Activated naive CD4-positive, alpha-beta T cell treated with anti-CD3 and anti-CD28 coated beads, Interleukin-2, amount 10 ng/mL, durations not matched to agents 7 days and 5 days (primary cell): ENCODE measurements at regions of chr6 and their contacts with region 1.

Region 1: DNA sequence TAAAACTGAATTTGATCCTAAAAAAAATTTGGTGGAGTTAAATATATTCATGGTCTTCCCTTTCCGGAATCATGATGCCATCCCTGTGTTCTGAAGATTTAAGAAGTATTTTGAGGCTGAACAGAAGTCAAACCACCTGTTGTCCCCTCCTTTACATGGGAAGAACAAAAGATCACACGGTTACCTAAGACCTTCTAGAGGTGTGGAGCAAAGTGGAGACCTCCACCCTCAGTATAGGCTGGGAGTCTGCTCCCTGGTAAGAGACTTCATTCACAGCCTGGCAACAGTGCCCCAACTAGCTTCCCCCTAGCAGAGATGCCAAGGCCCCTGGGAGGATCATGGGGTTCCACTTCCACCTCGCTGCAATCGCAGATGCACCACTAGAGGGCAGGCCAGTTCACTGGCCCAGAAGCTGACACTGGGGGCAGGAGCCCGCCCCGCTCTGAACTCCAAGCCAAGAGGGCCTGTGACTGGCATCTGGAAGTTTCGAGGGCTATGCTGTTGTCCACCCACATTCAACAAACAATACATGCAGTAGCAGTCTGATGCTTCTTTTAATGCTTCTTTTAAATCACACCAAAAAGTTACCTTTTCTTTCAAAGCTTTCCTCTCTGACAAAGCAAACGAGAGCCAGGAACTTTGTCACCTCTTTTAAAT is 19.5 kb upstream of the UBE2J1 start:
- DNase-seq: peak; percentile 85
- H3K4me3 Mint-ChIP-seq: no peak overlapping the region
- H3K27ac Mint-ChIP-seq: peak overlapping the region; percentile 84
- H3K4me1 Mint-ChIP-seq: peaks cover 45% of the 10 kb centered on the region
- H3K27me3 Mint-ChIP-seq: no peaks in the 10 kb centered on the region

Region 2: GRCh38 chr6:89297695-89298351 is 74.2 kb before region 1 on chr6:
- CTCF ChIA-PET with region 1: interaction called, 10 read pairs
- DNase-seq: peak; percentile 72
- H3K4me3 Mint-ChIP-seq: peak overlapping the region; percentile 13
- H3K27ac Mint-ChIP-seq: peak overlapping the region; percentile 91
- H3K4me1 Mint-ChIP-seq: peaks cover 23% of the 10 kb centered on the region
- H3K27me3 Mint-ChIP-seq: peaks cover 8% of the 10 kb centered on the region

Region 3: DNA sequence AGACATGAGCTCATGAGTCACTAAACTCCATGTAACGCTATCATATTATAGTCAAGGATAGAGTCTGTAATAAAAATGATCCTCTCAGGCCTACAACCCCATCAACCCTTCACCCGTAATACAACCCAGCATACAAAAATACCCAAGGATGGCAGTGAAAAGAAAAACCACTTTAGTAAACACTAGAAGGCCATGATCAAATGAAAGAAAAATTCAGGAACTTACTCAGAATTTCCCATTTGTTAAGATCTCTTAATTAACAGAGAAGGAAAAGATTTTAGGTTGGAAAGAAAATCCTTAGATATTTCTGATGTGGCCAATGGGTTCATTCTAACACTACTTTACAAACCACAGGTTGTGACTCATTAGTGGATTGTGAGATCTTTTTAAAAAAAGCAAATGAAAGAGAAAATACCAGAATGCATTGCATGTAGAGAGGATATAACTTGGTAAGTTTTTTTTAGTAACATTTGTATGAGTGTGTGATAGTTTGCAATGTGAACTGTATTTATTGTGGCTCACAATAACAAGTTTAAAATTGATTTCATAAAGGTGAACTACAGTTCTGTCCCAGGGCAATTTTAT is 11.5 kb before region 1 on chr6:
- CTCF ChIA-PET with region 1: interaction called, 21 read pairs
- DNase-seq: no peak
- H3K4me3 Mint-ChIP-seq: no peak overlapping the region
- H3K27ac Mint-ChIP-seq: peak overlapping the region; percentile 75
- H3K4me1 Mint-ChIP-seq: peaks cover 70% of the 10 kb centered on the region
- H3K27me3 Mint-ChIP-seq: no peaks in the 10 kb centered on the region

Region 4: GRCh38 chr6:89432875-89433251 is 60.9 kb after region 1 on chr6 and contains the start of gene ANKRD6:
- CTCF ChIA-PET with region 1: interaction called, 18 read pairs
- DNase-seq: peak; percentile 81
- H3K4me3 Mint-ChIP-seq: peak within 1 kb of the TSS; percentile 81
- H3K27ac Mint-ChIP-seq: no peak within 1 kb of the TSS
- H3K4me1 Mint-ChIP-seq: peaks cover 20% of the 10 kb centered on the region
- H3K27me3 Mint-ChIP-seq: peaks cover 56% of the 10 kb centered on the region